Caco-2 (cell line): ENCODE measurements at regions of chr14 and their contacts with region 1.

Region 1: GRCh38 chr14:37466623-37467088 is 128.4 kb downstream of the FOXA1 start:
- DNase-seq: peak; percentile 85 to 88
- H3K4me3 ChIP-seq: no peak overlapping the region
- H3K4me3 Mint-ChIP-seq: peak overlapping the region; percentile 48
- H3K27ac Mint-ChIP-seq: peak overlapping the region; percentile 91
- H3K4me1 ChIP-seq: peaks cover 24% of the 10 kb centered on the region
- H3K4me1 Mint-ChIP-seq: peaks cover 11% of the 10 kb centered on the region
- H3K27me3 ChIP-seq: no peaks in the 10 kb centered on the region
- H3K27me3 Mint-ChIP-seq: no peaks in the 10 kb centered on the region
- CTCF ChIP-seq: no peak

Region 2: DNA sequence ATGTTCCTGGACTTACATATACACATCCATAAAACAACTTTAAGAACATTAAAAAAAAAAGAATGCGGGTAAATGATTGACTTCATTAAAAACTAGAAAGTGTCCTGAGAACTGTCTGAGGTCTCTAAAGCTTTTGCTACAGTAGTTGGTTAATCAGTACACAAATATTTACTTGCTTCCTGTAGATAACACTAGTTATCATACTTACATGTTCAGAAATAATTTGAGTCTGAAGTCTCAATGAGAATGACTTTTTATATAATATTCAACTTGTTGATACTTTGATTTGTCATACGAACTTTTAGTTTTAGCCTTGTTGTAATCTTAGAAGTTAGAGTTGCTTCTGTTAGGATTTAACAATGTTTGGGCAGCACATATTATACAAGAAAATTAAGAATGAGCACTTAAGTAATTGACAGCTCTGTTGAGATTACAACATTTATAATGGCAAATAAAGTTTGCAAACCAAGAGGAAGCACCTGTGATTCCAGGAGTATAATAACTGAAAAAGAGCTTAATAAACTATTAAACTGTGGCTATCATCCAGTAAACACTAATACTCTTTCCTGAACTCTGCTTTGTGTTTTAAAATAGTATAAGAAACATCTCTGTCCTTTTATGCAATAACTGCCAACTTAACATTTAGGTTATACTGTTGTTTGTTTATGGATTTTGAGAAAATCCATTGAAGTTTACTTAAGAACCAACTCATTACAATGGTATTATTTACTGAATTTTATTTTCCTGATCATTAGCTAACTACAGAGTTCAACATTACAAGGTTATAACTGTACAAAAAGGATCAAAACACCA is 137.3 kb before region 1 on chr14:
- CTCF ChIA-PET with region 1: no interaction called
- POLR2A ChIA-PET with region 1: no interaction called
- intact Hi-C with region 1: loop called (anchors 1 kb)
- DNase-seq: peak in 1 of 2 experiments; percentile 27
- H3K4me3 ChIP-seq: no peak overlapping the region
- H3K4me3 Mint-ChIP-seq: peak overlapping the region; percentile 56
- H3K27ac Mint-ChIP-seq: peak overlapping the region; percentile 65
- H3K4me1 ChIP-seq: peaks cover 23% of the 10 kb centered on the region
- H3K4me1 Mint-ChIP-seq: peaks cover 15% of the 10 kb centered on the region
- H3K27me3 ChIP-seq: no peaks in the 10 kb centered on the region
- H3K27me3 Mint-ChIP-seq: no peaks in the 10 kb centered on the region
- CTCF ChIP-seq: no peak

Region 3: DNA sequence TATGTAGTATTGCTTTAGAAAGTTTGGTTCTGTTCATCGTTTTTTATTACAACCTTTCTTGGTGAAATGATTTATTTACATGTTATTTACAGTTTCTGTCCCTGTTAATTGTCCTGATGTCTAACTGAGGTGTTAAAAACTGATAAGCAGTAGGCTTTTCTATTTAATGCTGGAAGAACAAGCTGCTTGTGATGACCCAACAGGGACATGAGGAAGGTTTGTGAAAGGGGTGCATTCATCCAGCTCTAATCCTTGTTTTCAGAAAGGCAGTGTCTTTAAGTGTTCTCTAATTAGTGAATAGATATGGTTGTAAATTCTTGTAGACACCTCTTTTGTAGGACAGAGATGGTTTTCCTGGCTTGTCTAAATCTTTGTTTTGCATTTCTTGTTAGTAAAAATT is 63.0 kb before region 1 on chr14:
- CTCF ChIA-PET with region 1: no interaction called
- POLR2A ChIA-PET with region 1: interaction called, 3 read pairs
- intact Hi-C with region 1: loop called (anchors 1 kb)
- DNase-seq: no peak
- H3K4me3 ChIP-seq: no peak overlapping the region
- H3K4me3 Mint-ChIP-seq: no peak overlapping the region
- H3K27ac Mint-ChIP-seq: no peak overlapping the region
- H3K4me1 ChIP-seq: peaks cover 82% of the 10 kb centered on the region
- H3K4me1 Mint-ChIP-seq: peaks cover 44% of the 10 kb centered on the region
- H3K27me3 ChIP-seq: no peaks in the 10 kb centered on the region
- H3K27me3 Mint-ChIP-seq: no peaks in the 10 kb centered on the region
- CTCF ChIP-seq: no peak

Region 4: GRCh38 chr14:37411079-37411735 is 55.4 kb before region 1 on chr14:
- CTCF ChIA-PET with region 1: no interaction called
- POLR2A ChIA-PET with region 1: no interaction called
- intact Hi-C with region 1: loop called (anchors 1 kb)
- DNase-seq: no peak
- H3K4me3 ChIP-seq: no peak overlapping the region
- H3K4me3 Mint-ChIP-seq: no peak overlapping the region
- H3K27ac Mint-ChIP-seq: no peak overlapping the region
- H3K4me1 ChIP-seq: peaks cover 51% of the 10 kb centered on the region
- H3K4me1 Mint-ChIP-seq: peaks cover 21% of the 10 kb centered on the region
- H3K27me3 ChIP-seq: no peaks in the 10 kb centered on the region
- H3K27me3 Mint-ChIP-seq: no peaks in the 10 kb centered on the region
- CTCF ChIP-seq: no peak

Region 5: DNA sequence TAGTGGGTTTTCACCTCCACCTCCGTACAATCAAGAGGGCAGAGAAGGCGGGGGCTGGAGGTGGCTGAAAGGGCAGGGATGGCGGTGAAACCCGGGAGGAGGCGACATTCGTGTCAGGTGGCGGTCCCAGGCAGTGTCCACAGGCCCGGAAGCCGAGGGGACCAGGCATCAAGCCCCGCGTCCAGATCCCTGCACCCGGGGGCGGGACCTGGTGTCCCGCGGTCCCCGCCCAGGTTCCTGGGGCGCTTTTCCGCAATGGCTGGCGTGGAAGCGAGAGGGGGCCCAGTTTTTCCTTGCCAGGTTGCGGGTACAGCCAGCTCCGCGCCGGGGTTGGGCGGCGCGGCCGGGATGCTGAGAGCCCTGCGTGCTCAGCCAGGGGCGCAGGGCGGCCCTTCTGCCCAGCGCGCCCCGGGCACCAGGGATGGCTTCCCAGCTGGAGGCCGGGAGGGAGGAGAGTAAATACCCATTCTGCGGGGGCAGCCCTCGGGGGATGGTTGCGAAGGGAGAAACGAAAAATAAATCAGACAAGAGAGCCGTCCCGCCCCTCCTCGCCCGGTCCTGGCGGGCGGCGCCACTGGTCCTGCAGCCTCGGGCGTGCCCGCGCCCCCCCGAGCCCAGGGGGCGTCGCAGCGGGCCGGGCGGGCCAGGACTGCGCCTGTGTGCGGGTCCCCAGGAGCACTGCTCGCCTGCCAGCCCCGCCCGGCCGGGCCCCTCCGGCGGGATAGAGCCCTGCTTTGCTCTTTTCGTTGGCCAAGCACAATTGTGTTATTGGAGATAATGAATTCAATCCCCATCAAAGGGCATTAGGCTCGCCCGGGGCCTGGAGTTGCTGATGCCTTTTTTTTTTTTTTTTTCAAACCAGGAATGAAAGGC is 116.9 kb after region 1 on chr14:
- CTCF ChIA-PET with region 1: no interaction called
- POLR2A ChIA-PET with region 1: no interaction called
- intact Hi-C with region 1: loop called (anchors 1 kb)
- DNase-seq: peak; percentile 92
- H3K4me3 ChIP-seq: peak overlapping the region; percentile 72
- H3K4me3 Mint-ChIP-seq: peak overlapping the region; percentile 78
- H3K27ac Mint-ChIP-seq: peak overlapping the region; percentile 97
- H3K4me1 ChIP-seq: peaks cover 32% of the 10 kb centered on the region
- H3K4me1 Mint-ChIP-seq: peaks cover 23% of the 10 kb centered on the region
- H3K27me3 ChIP-seq: no peaks in the 10 kb centered on the region
- H3K27me3 Mint-ChIP-seq: no peaks in the 10 kb centered on the region
- CTCF ChIP-seq: peak in 1 of 2 experiments; percentile 3